CD8-positive, alpha-beta memory T cell (primary cell): ENCODE measurements at regions of chr10 and their contacts with region 1.

Region 1: DNA sequence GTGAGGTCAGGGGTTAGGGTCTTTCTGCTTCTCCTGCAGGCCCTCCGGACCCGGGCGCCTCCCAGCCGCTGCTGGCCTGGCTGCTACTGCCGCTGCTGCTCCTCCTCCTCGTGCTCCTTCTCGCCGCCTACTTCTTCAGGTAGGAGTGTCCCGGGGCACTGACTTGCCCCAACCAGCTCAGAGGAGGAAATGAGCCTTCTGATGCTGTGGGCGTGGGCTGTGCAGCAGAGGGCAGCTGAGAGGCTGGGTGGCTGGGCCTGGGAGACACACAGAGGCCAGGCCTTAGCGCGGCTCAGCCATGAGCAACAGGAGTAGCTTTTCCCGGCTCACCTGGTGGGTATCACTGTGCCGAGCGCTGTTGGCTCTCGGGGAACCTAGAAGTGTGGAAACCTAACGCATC is 78.9 kb downstream of the MKI67 start:
- DNase-seq: peak; percentile 76 to 90 (median 80)
- H3K4me3 ChIP-seq: peak overlapping the region; percentile 94
- H3K4me3 Mint-ChIP-seq: peak overlapping the region; percentile 85 to 97 (median 88)
- H3K27ac ChIP-seq: peak overlapping the region; percentile 95
- H3K27ac Mint-ChIP-seq: peak overlapping the region; percentile 94 to 100 (median 97)
- H3K4me1 ChIP-seq: peaks cover 55% of the 10 kb centered on the region
- H3K4me1 Mint-ChIP-seq: peaks cover 57 to 73% (median 64%) of the 10 kb centered on the region in 3 donors
- H3K27me3 ChIP-seq: no peaks in the 10 kb centered on the region
- H3K27me3 Mint-ChIP-seq: no peaks in the 10 kb centered on the region

Region 2: GRCh38 chr10:128011175-128011979 is 36.0 kb before region 1 on chr10:
- CTCF ChIA-PET with region 1: interaction called, 11 read pairs
- POLR2A ChIA-PET with region 1: no interaction called
- DNase-seq: peak; percentile 80 to 88 (median 81)
- H3K4me3 ChIP-seq: no peak overlapping the region
- H3K4me3 Mint-ChIP-seq: peak overlapping the region in 2 of 7 donors; percentile 3 to 6
- H3K27ac ChIP-seq: no peak overlapping the region
- H3K27ac Mint-ChIP-seq: no peak overlapping the region
- H3K4me1 ChIP-seq: peaks cover 7% of the 10 kb centered on the region
- H3K4me1 Mint-ChIP-seq: peaks cover 8 to 9% (median 8%) of the 10 kb centered on the region in 3 donors
- H3K27me3 ChIP-seq: peaks cover 3% of the 10 kb centered on the region
- H3K27me3 Mint-ChIP-seq: peaks cover 4 to 24% of the 10 kb centered on the region in 2 donors

Region 3: DNA sequence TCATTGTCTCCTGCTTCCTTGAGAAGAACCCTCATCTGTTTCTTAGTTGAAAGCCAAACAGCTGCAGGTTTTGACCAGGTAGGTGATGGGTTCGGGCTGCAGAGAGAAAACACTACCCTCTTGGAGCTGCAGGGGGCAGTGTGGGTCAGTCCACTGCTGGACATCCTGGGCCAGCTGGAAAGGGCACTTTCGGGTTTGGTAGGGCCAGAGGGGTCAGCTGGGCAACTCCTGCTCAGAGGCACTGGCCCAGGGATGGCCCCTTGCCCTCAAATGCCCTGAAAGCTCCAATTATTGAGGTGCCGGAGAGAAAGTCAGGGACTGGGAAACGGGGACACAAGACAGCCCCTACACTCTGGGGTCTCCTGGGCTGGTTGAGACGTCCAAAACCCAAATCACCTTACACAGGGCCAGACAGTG is 11.8 kb before region 1 on chr10:
- CTCF ChIA-PET with region 1: interaction called, 37 read pairs
- POLR2A ChIA-PET with region 1: interaction called, 4 read pairs
- DNase-seq: peak; percentile 52 to 69 (median 59)
- H3K4me3 ChIP-seq: no peak overlapping the region
- H3K4me3 Mint-ChIP-seq: no peak overlapping the region
- H3K27ac ChIP-seq: no peak overlapping the region
- H3K27ac Mint-ChIP-seq: no peak overlapping the region
- H3K4me1 ChIP-seq: no peaks in the 10 kb centered on the region
- H3K4me1 Mint-ChIP-seq: peaks cover 0 to 6% (median 3%) of the 10 kb centered on the region in 3 donors
- H3K27me3 ChIP-seq: no peaks in the 10 kb centered on the region
- H3K27me3 Mint-ChIP-seq: no peaks in the 10 kb centered on the region

Region 4: DNA sequence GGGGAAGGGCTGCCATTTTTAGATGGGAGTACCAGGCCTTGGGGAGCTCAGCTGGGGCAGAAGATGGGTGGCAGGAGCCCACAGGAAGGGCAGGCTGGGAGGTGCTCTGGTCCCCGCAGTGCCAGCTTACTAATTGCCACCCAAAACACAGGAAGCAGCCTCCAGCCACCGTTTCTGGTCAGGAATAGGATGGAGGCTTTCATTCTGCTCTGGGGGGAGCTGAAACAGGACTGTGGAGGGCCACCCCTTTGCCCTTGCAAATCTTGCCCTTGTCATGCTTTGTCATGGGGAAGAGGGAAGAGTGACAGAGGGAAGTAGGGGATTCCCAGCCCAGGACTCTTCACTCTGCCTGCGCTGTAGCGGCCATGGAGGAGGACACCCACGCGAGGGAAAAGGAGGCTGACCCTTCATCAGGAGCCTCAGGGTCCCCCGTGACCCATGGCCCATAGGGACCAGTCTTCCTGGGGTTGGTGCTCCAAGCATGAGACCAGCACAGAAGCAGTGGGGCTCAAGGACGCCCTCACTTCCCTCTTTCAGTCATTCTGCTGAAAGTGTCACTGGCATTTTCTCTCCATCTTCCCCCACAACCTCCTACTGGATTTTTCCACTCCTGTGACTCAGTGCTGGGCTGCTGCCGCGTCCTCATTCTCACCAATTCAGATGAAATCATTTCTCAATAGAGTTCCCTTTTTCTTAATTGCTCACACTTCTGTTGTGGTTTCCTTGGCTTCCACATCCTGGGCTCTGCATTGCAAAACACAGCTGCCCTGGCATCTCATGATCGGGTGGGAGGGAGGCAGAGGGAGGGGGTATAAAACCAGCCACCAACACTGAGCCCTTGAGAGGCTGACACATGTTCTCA is 17.0 kb after region 1 on chr10:
- CTCF ChIA-PET with region 1: interaction called, 242 read pairs
- POLR2A ChIA-PET with region 1: interaction called, 51 read pairs
- DNase-seq: peak; percentile 52 to 82 (median 68)
- H3K4me3 ChIP-seq: peak overlapping the region; percentile 53
- H3K4me3 Mint-ChIP-seq: peak overlapping the region; percentile 63 to 86 (median 76)
- H3K27ac ChIP-seq: peak overlapping the region; percentile 45
- H3K27ac Mint-ChIP-seq: peak overlapping the region; percentile 57 to 98 (median 91)
- H3K4me1 ChIP-seq: peaks cover 58% of the 10 kb centered on the region
- H3K4me1 Mint-ChIP-seq: peaks cover 82 to 86% (median 83%) of the 10 kb centered on the region in 3 donors
- H3K27me3 ChIP-seq: no peaks in the 10 kb centered on the region
- H3K27me3 Mint-ChIP-seq: no peaks in the 10 kb centered on the region

Region 5: DNA sequence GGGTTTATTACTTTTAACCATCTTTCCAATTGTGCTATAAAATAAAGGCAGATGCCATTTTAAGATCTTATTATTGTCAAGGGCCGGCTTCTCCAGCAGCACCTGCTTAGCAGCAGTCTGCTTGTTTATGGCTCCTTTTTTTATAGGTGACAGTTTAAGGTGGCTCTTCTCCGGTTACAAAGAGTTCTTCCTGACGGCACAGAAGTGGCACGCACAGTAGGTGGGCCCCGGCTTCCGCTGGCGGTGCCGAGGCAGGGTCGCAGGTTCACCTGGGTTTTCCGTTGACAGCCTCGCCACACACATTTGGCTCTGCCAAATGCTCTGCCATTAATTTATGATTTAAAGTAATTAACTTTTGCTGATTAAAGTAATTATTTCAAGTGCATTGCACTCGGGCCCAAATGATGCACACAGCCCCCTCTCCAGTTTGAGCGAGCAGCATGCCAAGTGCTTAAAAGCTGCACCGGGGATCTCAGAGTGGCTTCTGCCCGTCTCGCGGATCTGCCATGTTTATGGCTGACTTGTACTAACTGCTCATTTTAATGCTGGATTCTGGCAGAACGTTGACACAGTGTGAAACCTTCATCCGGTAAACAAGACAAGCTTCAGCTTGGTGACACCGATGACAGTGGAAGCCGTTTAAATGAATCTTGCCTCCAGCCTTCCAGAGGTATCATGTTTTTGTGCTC is 433.9 kb after region 1 on chr10:
- CTCF ChIA-PET with region 1: no interaction called
- POLR2A ChIA-PET with region 1: no interaction called
- DNase-seq: no peak
- H3K4me3 ChIP-seq: no peak overlapping the region
- H3K4me3 Mint-ChIP-seq: no peak overlapping the region
- H3K27ac ChIP-seq: no peak overlapping the region
- H3K27ac Mint-ChIP-seq: no peak overlapping the region
- H3K4me1 ChIP-seq: no peaks in the 10 kb centered on the region
- H3K4me1 Mint-ChIP-seq: no peaks in the 10 kb centered on the region
- H3K27me3 ChIP-seq: no peaks in the 10 kb centered on the region
- H3K27me3 Mint-ChIP-seq: no peaks in the 10 kb centered on the region